CD4-positive, alpha-beta memory T cell (primary cell): ENCODE measurements at regions of chr18 and their contacts with region 1.

Region 1: DNA sequence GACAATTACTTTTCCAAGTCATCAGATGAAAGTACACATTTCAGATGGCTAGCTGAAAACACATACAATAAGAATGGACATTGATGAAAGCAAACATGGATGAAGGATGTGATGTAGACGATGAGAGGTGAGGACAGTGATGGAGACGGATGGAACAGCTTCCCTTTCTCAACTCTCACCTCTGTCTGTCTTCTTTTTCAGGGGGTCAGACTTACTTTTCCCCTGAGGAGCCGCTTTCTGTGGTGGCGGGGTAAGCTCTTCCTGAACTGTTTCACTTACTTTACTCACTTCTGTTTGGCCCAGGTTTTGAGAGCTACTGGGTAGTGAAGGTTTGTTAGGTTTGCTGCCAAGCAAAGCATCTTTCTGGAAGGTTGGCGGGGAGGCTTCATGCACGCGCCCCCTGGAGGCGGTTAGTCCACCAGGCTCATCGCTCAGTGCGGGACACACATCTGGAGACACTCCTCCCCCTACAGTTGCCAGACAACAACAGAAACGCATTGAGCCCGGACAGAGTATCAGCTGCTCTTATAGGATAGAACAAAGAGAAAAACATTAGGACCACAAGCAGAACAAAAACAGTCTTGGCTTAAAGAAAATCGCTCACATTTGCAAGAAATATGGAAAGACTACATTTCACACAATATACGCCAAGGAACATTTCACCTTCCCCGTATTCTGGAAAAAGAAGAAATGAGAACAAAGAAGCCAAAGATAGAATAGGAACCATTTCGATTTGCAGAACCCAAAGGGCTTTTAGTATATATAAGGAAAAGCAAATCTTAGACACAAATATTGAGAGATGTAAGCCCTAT is 90.5 kb downstream of the MYOM1 start:
- DNase-seq: peak; percentile 71 to 78 (median 76)
- H3K4me3 ChIP-seq: no peak overlapping the region
- H3K4me3 Mint-ChIP-seq: peak overlapping the region in 2 of 8 donors; percentile 35 to 57
- H3K27ac ChIP-seq: no peak overlapping the region
- H3K27ac Mint-ChIP-seq: peak overlapping the region in 5 of 7 donors; percentile 0 to 64 (median 32)
- H3K4me1 ChIP-seq: peaks cover 7% of the 10 kb centered on the region
- H3K4me1 Mint-ChIP-seq: peaks cover 4 to 11% (median 9%) of the 10 kb centered on the region in 4 donors
- H3K27me3 ChIP-seq: no peaks in the 10 kb centered on the region
- H3K27me3 Mint-ChIP-seq: no peaks in the 10 kb centered on the region

Region 2: DNA sequence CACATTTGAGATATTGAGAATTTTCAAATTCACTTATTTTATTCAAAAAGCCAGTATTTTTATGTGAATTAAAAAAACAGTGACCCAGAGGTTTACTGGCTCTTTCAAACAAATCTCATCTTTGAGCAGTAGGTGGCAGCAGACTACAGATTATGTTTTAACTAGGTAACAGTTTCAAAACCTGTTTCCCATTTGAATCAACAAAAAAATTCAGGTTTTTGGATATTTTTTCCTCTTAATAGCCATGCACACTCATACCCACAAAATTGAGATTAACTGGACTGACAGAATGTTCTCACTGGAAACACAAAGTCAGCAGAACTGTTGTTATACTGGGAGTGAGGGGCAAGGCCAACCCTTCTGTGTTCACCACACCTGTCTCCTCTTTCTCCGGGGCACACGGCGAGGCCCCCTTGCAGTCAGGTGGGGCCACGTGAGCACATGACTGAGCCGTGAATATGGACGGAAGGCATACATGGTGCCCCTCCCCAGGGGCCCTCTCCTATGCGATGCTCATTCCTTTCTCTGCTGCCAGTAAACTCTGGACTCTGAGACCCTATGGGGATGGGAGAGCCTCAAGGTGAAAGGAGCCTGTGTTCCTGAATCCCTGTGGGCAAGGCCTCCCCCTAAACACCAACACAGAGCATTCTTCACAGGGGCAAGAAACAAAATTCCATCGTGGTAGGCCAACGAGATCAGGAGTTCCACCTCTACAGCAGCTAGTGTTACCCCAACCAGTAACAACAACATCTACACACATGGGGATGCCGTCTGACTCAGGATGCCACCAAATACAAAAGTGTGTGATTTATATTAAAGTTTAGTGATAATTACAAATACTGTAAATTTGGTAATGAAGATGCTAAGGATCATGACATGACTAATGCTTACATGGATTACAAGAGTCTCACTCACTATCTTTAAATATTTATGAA is 196.7 kb before region 1 on chr18:
- CTCF ChIA-PET with region 1: interaction called, 44 read pairs
- POLR2A ChIA-PET with region 1: no interaction called
- intact Hi-C with region 1: loop called (anchors 1 kb)
- DNase-seq: peak; percentile 59 to 79 (median 73)
- H3K4me3 ChIP-seq: no peak overlapping the region
- H3K4me3 Mint-ChIP-seq: peak overlapping the region in 6 of 8 donors; percentile 18 to 64 (median 44)
- H3K27ac ChIP-seq: peak overlapping the region; percentile 56
- H3K27ac Mint-ChIP-seq: peak overlapping the region; percentile 83 to 94 (median 89)
- H3K4me1 ChIP-seq: peaks cover 36% of the 10 kb centered on the region
- H3K4me1 Mint-ChIP-seq: peaks cover 29 to 43% (median 37%) of the 10 kb centered on the region in 4 donors
- H3K27me3 ChIP-seq: no peaks in the 10 kb centered on the region
- H3K27me3 Mint-ChIP-seq: no peaks in the 10 kb centered on the region

Region 3: GRCh38 chr18:2994603-2995432 is 134.4 kb before region 1 on chr18:
- CTCF ChIA-PET with region 1: interaction called, 291 read pairs
- POLR2A ChIA-PET with region 1: interaction called, 17 read pairs
- intact Hi-C with region 1: loop called (anchors 1 kb)
- DNase-seq: peak; percentile 75 to 84 (median 79)
- H3K4me3 ChIP-seq: peak overlapping the region in 1 of 2 donors; percentile 29
- H3K4me3 Mint-ChIP-seq: peak overlapping the region; percentile 53 to 81 (median 68)
- H3K27ac ChIP-seq: peak overlapping the region; percentile 28
- H3K27ac Mint-ChIP-seq: peak overlapping the region; percentile 61 to 94 (median 90)
- H3K4me1 ChIP-seq: peaks cover 62% of the 10 kb centered on the region
- H3K4me1 Mint-ChIP-seq: peaks cover 57 to 87% (median 73%) of the 10 kb centered on the region in 4 donors
- H3K27me3 ChIP-seq: no peaks in the 10 kb centered on the region
- H3K27me3 Mint-ChIP-seq: no peaks in the 10 kb centered on the region

Region 4: GRCh38 chr18:3012964-3013804 is 116.1 kb before region 1 on chr18 and contains the start of gene LPIN2:
- CTCF ChIA-PET with region 1: interaction called, 15 read pairs
- POLR2A ChIA-PET with region 1: interaction called, 3 read pairs
- intact Hi-C with region 1: no loop called
- DNase-seq: peak; percentile 97 to 98 (median 98)
- H3K4me3 ChIP-seq: peak within 1 kb of the TSS; percentile 55 to 70
- H3K4me3 Mint-ChIP-seq: peak within 1 kb of the TSS; percentile 93 to 99 (median 96)
- H3K27ac ChIP-seq: peak within 1 kb of the TSS; percentile 63
- H3K27ac Mint-ChIP-seq: peak within 1 kb of the TSS; percentile 94 to 98 (median 98)
- H3K4me1 ChIP-seq: peaks cover 68% of the 10 kb centered on the region
- H3K4me1 Mint-ChIP-seq: peaks cover 51 to 75% (median 68%) of the 10 kb centered on the region in 4 donors
- H3K27me3 ChIP-seq: no peaks in the 10 kb centered on the region
- H3K27me3 Mint-ChIP-seq: no peaks in the 10 kb centered on the region
- total RNA-seq, gene LPIN2: 95.4 to 103 TPM

Region 5: DNA sequence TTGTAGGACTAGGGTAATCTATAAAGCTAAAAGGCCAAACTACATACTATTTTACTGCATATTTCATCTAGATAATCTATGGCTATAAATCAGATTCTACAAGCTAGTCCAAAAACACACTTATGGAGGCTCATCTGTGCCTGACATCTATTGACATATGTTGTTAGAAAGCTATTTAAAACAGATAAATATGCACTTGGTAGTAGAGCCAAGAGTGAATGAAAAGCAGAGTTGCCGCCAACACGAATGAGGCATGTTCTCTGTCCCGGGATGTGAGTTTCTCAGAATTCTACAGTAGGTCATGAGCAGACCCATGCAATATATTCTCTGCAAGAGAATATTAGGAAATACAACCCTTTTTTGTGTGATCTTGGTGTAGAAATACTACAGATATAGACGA is 49.6 kb before region 1 on chr18:
- CTCF ChIA-PET with region 1: interaction called, 22 read pairs
- POLR2A ChIA-PET with region 1: no interaction called
- intact Hi-C with region 1: no loop called
- DNase-seq: no peak
- H3K4me3 ChIP-seq: no peak overlapping the region
- H3K4me3 Mint-ChIP-seq: no peak overlapping the region
- H3K27ac ChIP-seq: no peak overlapping the region
- H3K27ac Mint-ChIP-seq: no peak overlapping the region
- H3K4me1 ChIP-seq: no peaks in the 10 kb centered on the region
- H3K4me1 Mint-ChIP-seq: peaks cover 0 to 3% (median 0%) of the 10 kb centered on the region in 4 donors
- H3K27me3 ChIP-seq: no peaks in the 10 kb centered on the region
- H3K27me3 Mint-ChIP-seq: no peaks in the 10 kb centered on the region

Region 6: DNA sequence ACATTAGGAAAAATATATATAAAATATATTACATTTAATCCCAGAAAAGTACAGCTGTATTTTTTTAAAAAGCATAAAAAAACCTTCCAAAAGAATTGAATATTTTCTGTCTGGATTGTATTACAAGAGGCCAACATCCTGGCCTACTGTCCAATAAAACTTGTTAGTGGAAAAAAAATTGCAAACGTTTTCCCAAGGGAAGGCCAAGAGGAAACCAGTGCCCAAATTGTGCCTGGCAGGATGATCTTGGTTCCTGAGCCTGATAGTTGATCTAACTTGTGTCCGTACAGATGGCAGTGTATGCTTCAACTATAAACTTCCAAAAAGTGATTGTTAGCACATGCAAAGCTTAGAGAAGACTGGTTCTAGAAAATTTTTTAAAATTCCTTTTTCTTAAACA is 25.7 kb before region 1 on chr18:
- CTCF ChIA-PET with region 1: interaction called, 22 read pairs
- POLR2A ChIA-PET with region 1: no interaction called
- intact Hi-C with region 1: no loop called
- DNase-seq: no peak
- H3K4me3 ChIP-seq: no peak overlapping the region
- H3K4me3 Mint-ChIP-seq: no peak overlapping the region
- H3K27ac ChIP-seq: no peak overlapping the region
- H3K27ac Mint-ChIP-seq: no peak overlapping the region
- H3K4me1 ChIP-seq: no peaks in the 10 kb centered on the region
- H3K4me1 Mint-ChIP-seq: peaks cover 0 to 5% (median 0%) of the 10 kb centered on the region in 4 donors
- H3K27me3 ChIP-seq: no peaks in the 10 kb centered on the region
- H3K27me3 Mint-ChIP-seq: peaks cover 0 to 5% of the 10 kb centered on the region in 2 donors

Region 7: GRCh38 chr18:3151399-3152264 is 22.4 kb after region 1 on chr18:
- CTCF ChIA-PET with region 1: interaction called, 24 read pairs
- POLR2A ChIA-PET with region 1: no interaction called
- intact Hi-C with region 1: no loop called
- DNase-seq: peak in 4 of 5 donors; percentile 23 to 34 (median 31)
- H3K4me3 ChIP-seq: no peak overlapping the region
- H3K4me3 Mint-ChIP-seq: no peak overlapping the region
- H3K27ac ChIP-seq: no peak overlapping the region
- H3K27ac Mint-ChIP-seq: peak overlapping the region in 1 of 7 donors; percentile 46
- H3K4me1 ChIP-seq: no peaks in the 10 kb centered on the region
- H3K4me1 Mint-ChIP-seq: peaks cover 0 to 6% (median 4%) of the 10 kb centered on the region in 4 donors
- H3K27me3 ChIP-seq: no peaks in the 10 kb centered on the region
- H3K27me3 Mint-ChIP-seq: peaks cover 0 to 4% of the 10 kb centered on the region in 2 donors

Region 8: GRCh38 chr18:3447895-3448837 is 318.9 kb after region 1 on chr18:
- CTCF ChIA-PET with region 1: no interaction called
- POLR2A ChIA-PET with region 1: no interaction called
- intact Hi-C with region 1: no loop called
- DNase-seq: peak; percentile 84 to 91 (median 89)
- H3K4me3 ChIP-seq: peak overlapping the region; percentile 74 to 84
- H3K4me3 Mint-ChIP-seq: peak overlapping the region; percentile 93 to 98 (median 96)
- H3K27ac ChIP-seq: peak overlapping the region; percentile 94
- H3K27ac Mint-ChIP-seq: peak overlapping the region; percentile 99 to 100 (median 100)
- H3K4me1 ChIP-seq: peaks cover 21% of the 10 kb centered on the region
- H3K4me1 Mint-ChIP-seq: peaks cover 9 to 53% (median 22%) of the 10 kb centered on the region in 4 donors
- H3K27me3 ChIP-seq: no peaks in the 10 kb centered on the region
- H3K27me3 Mint-ChIP-seq: peaks cover 0 to 6% of the 10 kb centered on the region in 2 donors